ENCODE measurements at regions of chr6 and their contacts with region 1.

Region 1: DNA sequence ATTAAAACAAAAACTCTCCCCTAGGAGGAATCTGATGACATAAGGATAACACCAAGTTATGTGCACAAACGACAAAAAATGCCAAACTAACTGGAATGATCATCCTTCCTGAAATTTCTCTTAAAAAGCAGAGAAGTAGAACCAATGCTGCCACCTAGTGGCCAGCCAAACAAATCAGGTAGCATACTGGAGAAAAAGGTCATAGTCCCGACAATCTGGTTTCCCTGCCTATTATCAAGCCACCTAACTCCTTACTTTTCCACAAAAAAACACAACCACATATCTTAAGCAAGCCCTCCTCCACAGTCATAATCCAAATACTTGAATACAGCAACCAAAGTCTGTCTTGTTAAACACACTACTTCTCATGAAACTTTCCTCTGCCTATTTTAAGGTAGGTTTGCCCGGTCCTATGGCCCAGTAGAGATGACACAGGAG is 5.3 kb downstream of the OARD1 start:
- DNase-seq: peak; percentile 54 to 89 (median 56)
- ATAC-seq: peak; percentile 20; the same call in 1 of the 3 replicates
- H3K4me3 ChIP-seq: no peak overlapping the region
- H3K27ac ChIP-seq: no peak overlapping the region
- H3K4me1 ChIP-seq: peaks cover 0 to 9% of the 10 kb centered on the region in 2 experiments; a peak in 1 of 5 replicates
- H3K27me3 ChIP-seq: no peaks in the 10 kb centered on the region
- CTCF ChIP-seq: peak; percentile 72 to 89 (median 84)
- EP300 ChIP-seq: no peak
- POLR2A ChIP-seq: no peak
- RAD21 ChIP-seq: peak; percentile 76 to 79

Region 2: DNA sequence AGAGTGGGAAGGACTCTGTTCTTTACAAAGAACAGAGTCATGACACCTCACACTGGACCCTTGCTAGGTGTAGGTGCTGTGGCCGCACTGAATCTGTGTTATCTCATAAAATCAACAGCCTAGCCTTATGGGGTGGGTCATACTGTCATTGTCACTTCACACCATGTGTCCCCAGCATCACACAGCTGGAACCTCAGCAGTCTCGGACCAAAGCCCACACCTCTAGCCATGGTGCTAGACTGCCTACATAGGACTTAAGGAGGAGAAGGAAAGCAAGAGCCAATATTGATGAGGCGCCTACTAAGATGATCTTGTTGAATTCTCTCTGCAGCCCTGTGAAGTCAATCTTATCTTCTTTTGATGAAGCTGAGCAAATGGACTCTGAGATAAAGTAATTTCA is 58.9 kb before region 1 on chr6:
- CTCF ChIA-PET with region 1: interaction called, 26 read pairs
- POLR2A ChIA-PET with region 1: no interaction called
- in situ Hi-C with region 1: no loop called
- intact Hi-C with region 1: loop called (anchors 2 kb)
- DNase-seq: no peak
- ATAC-seq: no peak
- H3K4me3 ChIP-seq: no peak overlapping the region
- H3K27ac ChIP-seq: no peak overlapping the region
- H3K4me1 ChIP-seq: no peaks in the 10 kb centered on the region
- H3K27me3 ChIP-seq: peaks cover 24 to 34% of the 10 kb centered on the region in 2 experiments
- CTCF ChIP-seq: no peak
- EP300 ChIP-seq: no peak
- POLR2A ChIP-seq: no peak
- RAD21 ChIP-seq: no peak

Measured in K562 (cell line).